Activated CD4-positive, alpha-beta memory T cell treated with anti-CD3 and anti-CD28 coated beads for 36 hours (primary cell): ENCODE measurements at regions of chr16 and their contacts with region 1.

Region 1: GRCh38 chr16:57628008-57628781 is at the start of gene ADGRG1:
- DNase-seq: peak; percentile 81
- H3K4me3 Mint-ChIP-seq: peak within 1 kb of the TSS; percentile 14
- H3K27ac Mint-ChIP-seq: no peak within 1 kb of the TSS
- H3K4me1 Mint-ChIP-seq: peaks cover 11% of the 10 kb centered on the region
- H3K27me3 Mint-ChIP-seq: peaks cover 25% of the 10 kb centered on the region
- total RNA-seq, gene ADGRG1: 4.7 to 6.0 TPM

Region 2: GRCh38 chr16:57128771-57129389 is 499.3 kb before region 1 on chr16:
- CTCF ChIA-PET with region 1: no interaction called
- POLR2A ChIA-PET with region 1: no interaction called
- intact Hi-C with region 1: no loop called
- DNase-seq: peak; percentile 76
- H3K4me3 Mint-ChIP-seq: peak overlapping the region; percentile 33
- H3K27ac Mint-ChIP-seq: peak overlapping the region; percentile 74
- H3K4me1 Mint-ChIP-seq: peaks cover 70% of the 10 kb centered on the region
- H3K27me3 Mint-ChIP-seq: no peaks in the 10 kb centered on the region

Region 3: GRCh38 chr16:57609541-57610401 is 18.4 kb before region 1 on chr16:
- CTCF ChIA-PET with region 1: interaction called, 9 read pairs
- POLR2A ChIA-PET with region 1: no interaction called
- intact Hi-C with region 1: loop called (anchors 1 kb)
- DNase-seq: peak; percentile 92
- H3K4me3 Mint-ChIP-seq: peak overlapping the region; percentile 48
- H3K27ac Mint-ChIP-seq: peak overlapping the region; percentile 94
- H3K4me1 Mint-ChIP-seq: peaks cover 51% of the 10 kb centered on the region
- H3K27me3 Mint-ChIP-seq: no peaks in the 10 kb centered on the region

Region 4: DNA sequence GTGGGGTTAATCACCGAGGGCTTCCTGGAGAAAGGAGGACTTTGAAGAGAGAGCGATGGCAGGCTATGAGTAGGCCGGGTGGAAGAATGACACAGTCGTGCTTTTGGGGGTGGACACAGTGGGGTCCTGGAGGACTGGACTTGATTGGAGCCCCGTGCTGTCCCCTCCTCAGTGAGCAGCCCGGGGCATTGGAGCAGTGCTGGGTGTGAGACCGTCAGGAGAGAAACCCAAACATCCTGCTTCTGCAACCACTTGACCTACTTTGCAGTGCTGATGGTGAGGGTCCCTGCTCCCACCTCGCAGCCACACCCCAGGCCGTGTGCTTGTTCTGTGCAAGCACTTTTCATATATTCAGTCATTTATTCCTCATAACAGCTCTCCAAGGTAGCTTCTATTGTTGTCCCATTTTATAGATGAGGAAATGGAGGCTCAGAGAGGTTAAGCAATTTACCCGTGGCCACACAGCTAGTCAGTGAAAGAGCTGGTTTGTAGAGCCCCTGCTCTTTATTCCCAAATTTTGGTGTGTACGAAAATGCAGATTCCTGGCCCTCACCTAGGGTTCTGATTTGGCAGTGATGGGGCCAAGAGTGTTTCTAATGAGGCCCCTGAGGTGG is 28.3 kb after region 1 on chr16:
- CTCF ChIA-PET with region 1: no interaction called
- POLR2A ChIA-PET with region 1: no interaction called
- intact Hi-C with region 1: no loop called
- DNase-seq: no peak
- H3K4me3 Mint-ChIP-seq: no peak overlapping the region
- H3K27ac Mint-ChIP-seq: no peak overlapping the region
- H3K4me1 Mint-ChIP-seq: peaks cover 6% of the 10 kb centered on the region
- H3K27me3 Mint-ChIP-seq: no peaks in the 10 kb centered on the region